ENCODE measurements at regions of chr1 and their contacts with region 1.

Region 1: DNA sequence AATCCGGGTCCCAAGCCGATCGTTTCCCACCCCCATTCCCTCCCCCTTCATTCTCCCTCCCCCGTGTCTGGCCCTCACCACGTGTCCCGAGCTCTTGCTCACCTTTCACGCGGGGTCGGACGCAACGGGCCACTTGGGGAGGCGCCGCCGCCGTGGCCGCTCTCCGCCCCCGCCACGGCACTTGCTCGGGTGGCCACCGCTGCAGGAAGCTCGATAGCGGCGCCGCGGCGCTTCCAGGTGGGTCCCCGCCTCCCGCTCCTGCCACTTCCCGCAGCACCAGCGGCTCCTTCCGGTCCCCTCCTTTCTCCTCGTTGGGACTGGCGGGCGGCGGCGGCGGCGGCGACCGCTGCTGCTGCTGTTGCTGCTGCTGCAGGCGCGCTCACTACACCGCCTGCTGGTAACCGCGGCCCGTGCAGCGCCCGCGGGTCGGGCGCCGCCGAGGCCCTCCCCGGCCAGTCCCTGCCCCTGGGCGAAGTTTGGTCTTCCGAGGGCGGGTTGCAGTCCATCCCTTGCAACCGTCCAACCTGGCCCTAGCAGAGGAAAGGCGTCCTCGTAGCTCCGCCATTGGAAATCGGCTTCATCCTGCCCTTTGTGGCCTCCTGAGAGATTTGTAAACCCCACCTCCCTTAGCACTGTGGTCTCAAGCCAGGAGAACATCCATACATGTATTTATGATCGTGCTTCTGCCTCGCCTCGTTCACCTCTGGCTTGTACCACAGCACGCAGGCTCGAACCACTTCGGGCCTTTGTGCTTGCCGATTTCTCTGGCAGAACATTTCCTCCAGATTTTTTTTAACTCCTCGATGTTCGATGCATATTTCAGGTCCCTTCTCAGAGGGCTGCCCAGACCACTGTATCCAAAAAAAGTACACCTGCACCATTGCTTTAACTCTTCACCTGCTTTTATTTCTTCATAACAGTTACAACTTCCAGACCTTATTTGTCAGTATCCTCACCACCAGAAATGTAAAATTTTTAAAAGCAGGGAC is 996 bp upstream of the ZZZ3 start:
- DNase-seq: peak; percentile 88 to 93
- ATAC-seq: peak; percentile 76 to 88 (median 77)
- H3K4me3 ChIP-seq: peak overlapping the region; percentile 76
- H3K4me3 Mint-ChIP-seq: peak overlapping the region; percentile 96
- H3K27ac ChIP-seq: peak overlapping the region; percentile 86
- H3K27ac Mint-ChIP-seq: peak overlapping the region; percentile 96
- H3K4me1 ChIP-seq: peaks cover 20% of the 10 kb centered on the region
- H3K4me1 Mint-ChIP-seq: peaks cover 35 to 36% of the 10 kb centered on the region in 2 donors
- H3K27me3 ChIP-seq: no peaks in the 10 kb centered on the region
- H3K27me3 Mint-ChIP-seq: no peaks in the 10 kb centered on the region
- CTCF ChIP-seq: peak; percentile 88

Region 2: GRCh38 chr1:77219166-77219887 is 464.1 kb before region 1 on chr1 and contains the start of gene PIGK:
- intact Hi-C with region 1: loop called (anchors 2 kb)
- DNase-seq: peak; percentile 82 to 92
- ATAC-seq: peak; percentile 97 to 98 (median 97)
- H3K4me3 ChIP-seq: peak within 1 kb of the TSS; percentile 97
- H3K4me3 Mint-ChIP-seq: peak within 1 kb of the TSS; percentile 94
- H3K27ac ChIP-seq: peak within 1 kb of the TSS; percentile 89
- H3K27ac Mint-ChIP-seq: peak within 1 kb of the TSS; percentile 91 to 92
- H3K4me1 ChIP-seq: no peaks in the 10 kb centered on the region
- H3K4me1 Mint-ChIP-seq: peaks cover 38 to 54% of the 10 kb centered on the region in 2 donors
- H3K27me3 ChIP-seq: no peaks in the 10 kb centered on the region
- H3K27me3 Mint-ChIP-seq: no peaks in the 10 kb centered on the region
- CTCF ChIP-seq: no peak
- total RNA-seq, gene PIGK: 25.4 to 29.9 (median 27.8) TPM

Region 3: DNA sequence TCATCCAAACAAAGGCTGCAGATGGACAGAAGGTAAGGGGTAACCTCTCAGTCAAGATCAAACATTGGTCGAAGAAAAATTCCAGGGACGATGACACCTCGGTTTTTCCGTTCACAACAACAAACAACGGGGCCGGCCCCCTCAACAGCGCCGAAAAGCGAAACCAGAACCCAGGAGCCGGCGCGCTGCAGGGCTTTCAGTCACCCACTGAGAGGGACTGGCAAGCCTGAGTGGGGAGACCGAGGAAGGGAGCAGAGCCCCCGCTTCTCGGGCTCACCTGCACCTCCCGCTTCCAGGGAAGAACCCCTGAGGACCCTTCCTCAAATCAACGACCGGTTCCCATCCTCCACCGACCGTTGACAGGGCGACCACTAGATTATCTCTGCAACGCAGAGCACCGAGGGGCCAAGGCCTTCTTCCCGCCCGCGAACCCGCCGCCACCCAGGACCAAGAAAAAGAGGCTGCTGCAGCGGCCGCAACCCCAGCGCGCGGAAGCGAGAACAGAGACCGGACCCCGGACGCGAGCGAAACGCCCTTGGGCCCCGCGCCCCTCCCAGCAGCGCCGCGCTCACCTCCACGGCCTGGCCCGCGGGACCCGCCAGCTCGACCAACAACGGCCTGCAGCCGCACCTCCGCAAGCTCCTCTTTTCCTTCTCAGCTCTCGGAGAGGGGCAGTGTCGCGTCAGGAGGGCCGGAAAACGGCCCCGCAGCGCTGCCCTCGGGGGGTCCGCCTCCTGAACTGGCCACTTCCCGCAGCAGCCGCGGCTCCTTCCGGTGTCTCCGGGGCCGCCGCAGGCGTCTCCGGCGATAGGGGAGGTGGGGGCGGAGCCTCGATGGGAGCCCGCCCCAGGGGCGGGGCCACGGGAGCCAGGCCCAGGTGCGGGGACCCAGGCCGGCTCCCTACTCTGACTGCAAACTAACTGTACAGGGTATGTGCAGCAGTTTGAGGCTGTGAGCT is 75.9 kb after region 1 on chr1 and contains the start of gene USP33:
- intact Hi-C with region 1: loop called (anchors 1 kb)
- DNase-seq: peak; percentile 95
- ATAC-seq: peak; percentile 87 to 97 (median 92)
- H3K4me3 ChIP-seq: peak within 1 kb of the TSS; percentile 93
- H3K4me3 Mint-ChIP-seq: peak within 1 kb of the TSS; percentile 94
- H3K27ac ChIP-seq: peak within 1 kb of the TSS; percentile 87
- H3K27ac Mint-ChIP-seq: peak within 1 kb of the TSS; percentile 97
- H3K4me1 ChIP-seq: peaks cover 8% of the 10 kb centered on the region
- H3K4me1 Mint-ChIP-seq: peaks cover 35 to 36% of the 10 kb centered on the region in 2 donors
- H3K27me3 ChIP-seq: no peaks in the 10 kb centered on the region
- H3K27me3 Mint-ChIP-seq: no peaks in the 10 kb centered on the region
- CTCF ChIP-seq: no peak
- total RNA-seq, gene USP33: 88.1 to 112 (median 101) TPM

Region 4: GRCh38 chr1:77779529-77780281 is 96.3 kb after region 1 on chr1 and contains the start of gene MIGA1:
- intact Hi-C with region 1: loop called (anchors 5 kb)
- DNase-seq: peak; percentile 67 to 96
- ATAC-seq: peak; percentile 94 to 97 (median 96)
- H3K4me3 ChIP-seq: peak within 1 kb of the TSS; percentile 94
- H3K4me3 Mint-ChIP-seq: peak within 1 kb of the TSS; percentile 95
- H3K27ac ChIP-seq: peak within 1 kb of the TSS; percentile 72
- H3K27ac Mint-ChIP-seq: peak within 1 kb of the TSS; percentile 85 to 96
- H3K4me1 ChIP-seq: peaks cover 14% of the 10 kb centered on the region
- H3K4me1 Mint-ChIP-seq: peaks cover 27 to 32% of the 10 kb centered on the region in 2 donors
- H3K27me3 ChIP-seq: no peaks in the 10 kb centered on the region
- H3K27me3 Mint-ChIP-seq: no peaks in the 10 kb centered on the region
- CTCF ChIP-seq: no peak
- total RNA-seq, gene MIGA1: 13.6 to 16.9 (median 15.6) TPM

Region 5: GRCh38 chr1:77978969-77979876 is 295.8 kb after region 1 on chr1 and contains the start of gene FUBP1:
- intact Hi-C with region 1: loop called (anchors 1 kb)
- DNase-seq: peak; percentile 90 to 100
- ATAC-seq: peak; percentile 76 to 89 (median 77)
- H3K4me3 ChIP-seq: peak within 1 kb of the TSS; percentile 87
- H3K4me3 Mint-ChIP-seq: no peak within 1 kb of the TSS
- H3K27ac ChIP-seq: peak within 1 kb of the TSS; percentile 93
- H3K27ac Mint-ChIP-seq: no peak within 1 kb of the TSS
- H3K4me1 ChIP-seq: peaks cover 18% of the 10 kb centered on the region
- H3K4me1 Mint-ChIP-seq: peaks cover 28 to 39% of the 10 kb centered on the region in 2 donors
- H3K27me3 ChIP-seq: no peaks in the 10 kb centered on the region
- H3K27me3 Mint-ChIP-seq: no peaks in the 10 kb centered on the region
- CTCF ChIP-seq: peak; percentile 65
- total RNA-seq, gene FUBP1: 247 to 285 (median 249) TPM

Measured in natural killer cell (primary cell).